Dendritic cell treated with granulocyte-macrophage colony-stimulating factor and Interleukin-4, amounts not matched to agents 40 ng/mL and 50 ng/mL, for 4 days (primary cell): ENCODE measurements at regions of chr1 and their contacts with region 1.

Region 1: DNA sequence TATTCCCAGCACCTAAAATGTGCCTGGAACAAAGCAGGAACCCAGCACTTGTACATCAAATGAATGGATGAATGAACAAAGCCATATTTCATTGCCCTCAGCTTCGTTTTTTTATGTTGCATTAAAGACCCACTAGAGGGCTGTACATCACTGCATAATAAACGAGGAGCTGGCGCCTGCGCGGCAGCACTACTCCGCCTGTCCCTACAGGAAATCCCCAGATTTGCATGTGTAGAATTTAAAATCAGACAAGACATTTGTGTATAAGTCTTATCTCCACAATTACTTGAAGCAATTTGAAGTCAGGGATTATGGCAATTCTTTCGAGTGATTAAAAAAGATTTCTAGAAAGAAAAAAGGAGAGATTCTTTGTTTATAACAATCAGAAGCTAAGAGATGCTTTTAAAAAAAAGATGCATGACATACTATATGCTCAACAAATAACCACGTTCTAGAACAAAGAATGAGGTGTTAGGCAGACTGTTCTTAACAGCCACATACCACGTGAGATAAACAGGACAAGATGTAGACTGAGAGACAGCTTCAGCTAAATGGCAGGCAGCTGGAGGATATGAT is 5.4 kb upstream of the NEK2 start:
- H3K4me3 Mint-ChIP-seq: no peak overlapping the region
- H3K27ac Mint-ChIP-seq: no peak overlapping the region
- H3K4me1 Mint-ChIP-seq: peaks cover 8% of the 10 kb centered on the region
- H3K27me3 Mint-ChIP-seq: peaks cover 7% of the 10 kb centered on the region

Region 2: GRCh38 chr1:211822677-211823407 is 142.0 kb after region 1 on chr1:
- intact Hi-C with region 1: no loop called
- H3K4me3 Mint-ChIP-seq: no peak overlapping the region
- H3K27ac Mint-ChIP-seq: peak overlapping the region; percentile 86
- H3K4me1 Mint-ChIP-seq: peaks cover 58% of the 10 kb centered on the region
- H3K27me3 Mint-ChIP-seq: no peaks in the 10 kb centered on the region

Region 3: GRCh38 chr1:212062832-212063438 is 382.1 kb after region 1 on chr1:
- intact Hi-C with region 1: loop called (anchors 2 kb)
- H3K4me3 Mint-ChIP-seq: no peak overlapping the region
- H3K27ac Mint-ChIP-seq: no peak overlapping the region
- H3K4me1 Mint-ChIP-seq: no peaks in the 10 kb centered on the region
- H3K27me3 Mint-ChIP-seq: no peaks in the 10 kb centered on the region

Region 4: GRCh38 chr1:212077051-212077450 is 396.2 kb after region 1 on chr1:
- intact Hi-C with region 1: no loop called
- H3K4me3 Mint-ChIP-seq: no peak overlapping the region
- H3K27ac Mint-ChIP-seq: no peak overlapping the region
- H3K4me1 Mint-ChIP-seq: no peaks in the 10 kb centered on the region
- H3K27me3 Mint-ChIP-seq: no peaks in the 10 kb centered on the region